ENCODE measurements at regions of chr2 and their contacts with region 1.

Region 1: DNA sequence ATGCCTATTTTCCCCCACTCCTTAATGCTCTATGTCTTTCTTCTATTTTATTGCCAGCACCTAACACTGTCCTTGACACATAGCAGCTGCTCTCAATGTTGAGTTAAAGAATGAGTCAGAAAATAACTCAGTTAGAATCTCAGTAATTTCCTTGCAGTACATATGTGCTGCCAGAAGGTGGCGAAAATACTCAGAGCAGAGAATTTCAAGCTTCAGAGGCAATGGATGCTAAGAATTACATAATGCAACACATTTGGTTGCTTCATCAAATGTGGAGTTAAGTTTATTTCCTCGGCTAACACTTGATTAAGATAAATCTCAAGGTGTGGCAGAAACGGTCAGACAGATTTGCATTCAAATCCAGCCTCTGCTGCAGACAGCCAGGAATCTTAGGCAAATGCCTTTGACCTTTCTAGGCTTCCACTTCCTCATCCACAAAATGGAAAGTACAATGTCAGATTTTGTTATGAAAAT is 105.6 kb downstream of the VSNL1 start:
- DNase-seq: no peak
- H3K4me3 ChIP-seq: no peak overlapping the region
- H3K27ac ChIP-seq: no peak overlapping the region
- H3K4me1 ChIP-seq: peaks cover 0 to 4% (median under 1%) of the 10 kb centered on the region in 4 experiments; a peak in 2 of 7 replicates
- H3K27me3 ChIP-seq: no peaks in the 10 kb centered on the region
- CTCF ChIP-seq: peak in 2 of 3 experiments; percentile 49 to 76; a peak in 2 of 4 replicates
- EP300 ChIP-seq: no peak
- POLR2A ChIP-seq: no peak
- RAD21 ChIP-seq: peak; percentile 61 to 70

Region 2: DNA sequence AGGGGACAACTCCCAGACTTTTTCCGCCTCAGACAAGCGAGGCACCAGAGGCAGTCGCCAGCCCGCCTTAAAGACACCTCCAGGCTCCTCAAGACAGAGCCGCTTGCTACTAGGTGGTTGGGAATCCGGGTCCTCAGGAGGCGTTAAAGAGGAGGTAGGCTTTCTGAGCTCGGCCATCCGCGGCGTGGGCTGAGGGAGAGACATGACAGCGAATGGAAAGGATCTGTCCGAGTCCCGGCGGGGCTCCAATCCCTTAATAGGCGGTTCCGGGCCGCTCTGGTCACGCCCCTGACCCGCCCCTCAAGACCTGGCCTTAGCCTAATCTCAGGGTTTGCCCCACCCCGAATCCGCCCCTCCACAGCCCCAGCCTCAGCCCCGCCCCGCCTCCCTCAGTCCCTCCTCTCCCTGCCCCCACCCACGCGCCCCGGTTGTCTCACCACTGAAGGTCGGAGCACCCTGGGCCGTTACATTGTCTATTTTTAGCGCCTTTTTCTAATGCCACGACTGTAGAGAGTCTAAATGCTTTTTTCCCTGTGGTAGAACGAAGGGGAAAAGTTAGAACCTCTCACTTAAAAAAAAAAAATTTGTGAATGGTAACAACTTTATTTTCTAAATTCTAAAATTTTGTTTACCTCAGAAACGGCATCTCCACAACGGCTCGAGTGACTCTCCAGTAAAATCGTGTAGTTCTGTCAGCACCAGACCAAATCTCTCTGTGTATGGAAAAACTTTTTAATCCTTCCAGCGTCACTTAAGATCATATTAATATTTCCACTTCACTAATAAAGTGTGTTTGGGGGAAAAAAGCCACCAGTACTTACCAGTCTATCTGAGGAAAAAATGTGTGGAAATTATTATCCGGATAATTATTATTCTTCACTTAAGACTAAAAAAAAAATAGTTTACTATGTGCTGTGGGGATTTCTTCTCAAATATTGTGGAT is 127.6 kb before region 1 on chr2 and contains the start of gene RAD51AP2:
- CTCF ChIA-PET with region 1: interaction called, 11 read pairs
- POLR2A ChIA-PET with region 1: no interaction called
- DNase-seq: peak in 1 of 2 experiments; percentile 96
- H3K4me3 ChIP-seq: peak within 1 kb of the TSS; percentile 39 to 75 (median 64)
- H3K27ac ChIP-seq: no peak within 1 kb of the TSS
- H3K4me1 ChIP-seq: peaks cover 0 to 4% (median 1%) of the 10 kb centered on the region in 4 experiments; a peak in 3 of 7 replicates
- H3K27me3 ChIP-seq: peaks cover 0 to 2% (median 0%) of the 10 kb centered on the region in 4 experiments; a peak in 1 of 7 replicates
- CTCF ChIP-seq: no peak
- EP300 ChIP-seq: no peak
- POLR2A ChIP-seq: no peak
- RAD21 ChIP-seq: no peak
- total RNA-seq, gene RAD51AP2: 0.08 and 0.20 TPM in 2 replicates

Region 3: DNA sequence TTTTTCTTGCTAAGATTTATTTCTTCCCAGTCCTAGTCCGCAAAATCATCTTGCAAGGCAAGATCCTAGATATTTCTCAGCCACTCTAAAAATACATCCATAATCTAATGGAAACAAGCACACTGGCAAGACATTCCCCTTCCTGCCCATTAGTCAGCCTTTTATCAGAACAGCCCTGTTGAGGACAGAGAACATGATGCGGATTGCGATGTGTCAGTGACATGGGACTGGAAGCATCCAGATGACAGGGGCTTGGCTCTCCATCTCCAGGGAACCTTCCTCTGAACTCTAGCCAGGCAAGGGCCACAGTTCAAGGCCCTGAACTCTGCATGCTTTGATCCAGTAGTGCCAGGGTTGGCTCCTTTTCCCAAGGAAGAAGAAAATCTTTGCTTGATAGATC is 35.6 kb before region 1 on chr2:
- CTCF ChIA-PET with region 1: interaction called, 22 read pairs
- POLR2A ChIA-PET with region 1: no interaction called
- DNase-seq: no peak
- H3K4me3 ChIP-seq: no peak overlapping the region
- H3K27ac ChIP-seq: no peak overlapping the region
- H3K4me1 ChIP-seq: peaks cover 3 to 11% (median 5%) of the 10 kb centered on the region in 4 experiments; a peak in 5 of 7 replicates
- H3K27me3 ChIP-seq: no peaks in the 10 kb centered on the region
- CTCF ChIP-seq: no peak
- EP300 ChIP-seq: no peak
- POLR2A ChIP-seq: no peak
- RAD21 ChIP-seq: no peak

Region 4: DNA sequence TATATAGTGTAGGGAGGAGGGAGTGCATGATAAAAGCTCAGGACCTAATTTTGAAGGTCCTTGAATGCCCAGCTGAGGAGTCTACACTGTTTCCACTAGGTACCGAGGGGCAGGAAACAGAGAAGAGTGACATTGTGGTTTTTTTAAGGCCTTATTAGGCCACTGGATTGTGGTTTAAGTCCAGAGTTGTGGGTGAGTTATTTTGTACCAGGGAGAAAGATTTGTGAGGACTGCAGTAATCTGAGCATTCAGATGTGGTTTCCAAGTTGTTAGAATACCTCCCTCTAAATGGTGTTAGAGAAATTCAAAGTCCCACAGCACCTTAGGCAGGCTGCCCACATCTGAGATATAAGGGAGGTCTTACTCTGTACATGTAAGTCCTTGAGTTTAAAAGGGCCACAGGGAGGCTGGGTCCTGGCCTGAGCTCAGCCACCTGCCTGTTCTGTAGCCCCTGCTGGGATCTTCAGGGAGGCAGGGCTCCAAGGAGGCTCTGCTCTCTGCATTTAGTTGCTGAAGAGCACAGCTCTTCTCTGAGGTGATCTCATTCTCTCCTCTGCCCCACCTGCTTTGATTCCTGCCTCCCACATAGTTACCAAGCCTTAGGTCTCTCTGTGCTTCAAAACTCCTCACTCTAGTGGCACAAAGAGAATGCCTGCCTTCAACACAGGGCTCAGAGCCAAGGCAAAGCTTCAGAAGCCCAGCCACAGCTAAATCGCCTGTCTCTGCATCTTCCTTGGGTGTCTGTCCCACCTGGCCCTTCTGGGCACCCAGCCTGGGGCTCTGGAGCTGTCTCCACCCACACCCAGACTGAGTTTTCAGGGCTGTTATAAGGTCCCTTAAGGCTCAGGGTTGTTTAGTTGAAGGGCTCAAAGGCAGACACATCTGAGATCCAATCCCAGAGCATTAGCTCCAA is 17.5 kb before region 1 on chr2:
- CTCF ChIA-PET with region 1: interaction called, 65 read pairs
- POLR2A ChIA-PET with region 1: interaction called, 3 read pairs
- DNase-seq: no peak
- H3K4me3 ChIP-seq: no peak overlapping the region
- H3K27ac ChIP-seq: no peak overlapping the region
- H3K4me1 ChIP-seq: peaks cover 0 to 6% (median 2%) of the 10 kb centered on the region in 4 experiments; a peak in 2 of 7 replicates
- H3K27me3 ChIP-seq: no peaks in the 10 kb centered on the region
- CTCF ChIP-seq: no peak
- EP300 ChIP-seq: no peak
- POLR2A ChIP-seq: no peak
- RAD21 ChIP-seq: no peak

Region 5: DNA sequence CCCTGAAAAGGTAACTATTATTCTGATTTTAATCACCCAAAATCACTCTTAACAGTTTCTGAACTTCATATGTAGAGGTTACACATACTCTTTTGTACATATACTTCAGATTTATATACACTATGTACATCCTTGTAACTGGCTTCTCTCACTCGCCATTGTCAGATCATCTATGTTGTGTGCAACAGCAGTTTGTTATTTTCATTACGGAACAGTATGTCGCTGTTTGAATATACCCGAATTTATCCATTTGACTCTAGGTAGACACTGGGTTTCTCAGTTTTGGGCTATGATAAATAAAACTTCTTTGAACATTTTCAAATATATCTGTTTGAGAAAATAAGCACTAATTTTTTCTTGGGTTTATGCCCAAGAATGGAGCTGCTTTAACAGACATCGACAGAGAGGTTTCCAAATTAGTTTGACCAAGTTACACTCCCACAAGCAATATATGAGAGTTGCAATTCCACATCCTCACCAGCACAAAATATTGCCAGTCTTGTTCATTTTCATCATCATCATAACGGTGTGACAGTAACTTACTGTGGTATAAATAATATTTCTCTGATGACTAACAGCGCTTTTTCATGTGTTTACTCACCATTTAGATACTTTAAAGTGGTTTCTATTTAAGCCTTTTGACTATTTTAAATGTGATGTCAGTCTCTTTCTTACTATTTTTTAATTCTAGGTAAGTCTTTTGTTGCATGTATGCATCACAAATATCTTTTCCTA is 26.6 kb after region 1 on chr2:
- CTCF ChIA-PET with region 1: interaction called, 61 read pairs
- POLR2A ChIA-PET with region 1: no interaction called
- DNase-seq: no peak
- H3K4me3 ChIP-seq: no peak overlapping the region
- H3K27ac ChIP-seq: no peak overlapping the region
- H3K4me1 ChIP-seq: no peaks in the 10 kb centered on the region
- H3K27me3 ChIP-seq: no peaks in the 10 kb centered on the region
- CTCF ChIP-seq: no peak
- EP300 ChIP-seq: no peak
- POLR2A ChIP-seq: no peak
- RAD21 ChIP-seq: no peak